Posterior vena cava (tissue), 2 donors: ENCODE measurements at regions of chr4 and their contacts with region 1.

Region 1: GRCh38 chr4:145909281-145909715 is 29.3 kb downstream of the ZNF827 start:
- DNase-seq: no peak

Region 2: GRCh38 chr4:145452447-145453162 is 456.7 kb before region 1 on chr4:
- intact Hi-C with region 1: loop called in 1 of 2 experiments (anchors 5 kb)
- DNase-seq: no peak